BJ (cell line): ENCODE measurements at regions of chr20 and their contacts with region 1.

Region 1: GRCh38 chr20:8790442-8791074 is 278.3 kb upstream of the PLCB4 start:
- DNase-seq: no peak
- H3K4me3 ChIP-seq: no peak overlapping the region
- H3K27me3 ChIP-seq: no peaks in the 10 kb centered on the region
- CTCF ChIP-seq: peak; percentile 98

Region 2: DNA sequence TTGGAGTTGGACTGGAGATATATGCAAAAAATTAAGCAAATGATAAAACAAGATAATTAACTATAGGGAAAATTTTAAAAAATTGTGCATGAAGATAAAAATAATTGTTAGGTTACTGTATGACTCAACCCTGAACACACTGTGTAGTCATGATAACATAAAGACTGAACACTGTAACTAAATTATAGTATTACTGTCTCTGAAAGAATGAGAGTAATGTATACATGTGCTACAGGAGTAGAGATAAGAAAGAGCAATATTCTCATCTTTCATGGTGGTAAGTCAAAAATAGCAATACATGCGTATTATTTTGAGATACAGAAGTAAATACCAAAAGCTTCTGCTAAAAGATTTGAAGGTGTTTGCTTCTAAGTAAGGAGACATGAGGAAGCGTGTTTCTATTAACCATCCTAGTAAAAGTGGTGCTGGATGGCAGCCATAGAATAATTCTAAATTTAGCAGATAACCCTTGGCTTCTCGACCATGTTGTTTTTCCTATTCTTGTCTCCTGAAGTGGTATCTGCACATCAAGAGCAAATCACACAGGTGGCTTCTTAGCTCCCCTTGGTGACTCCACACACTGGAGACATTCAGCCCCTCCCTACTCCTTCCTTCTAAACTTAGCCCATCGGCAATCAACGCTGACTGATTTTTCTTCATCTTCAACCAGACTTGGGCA is 112.3 kb before region 1 on chr20:
- CTCF ChIA-PET with region 1: no interaction called
- POLR2A ChIA-PET with region 1: no interaction called
- DNase-seq: no peak
- H3K4me3 ChIP-seq: no peak overlapping the region
- H3K27me3 ChIP-seq: no peaks in the 10 kb centered on the region
- CTCF ChIP-seq: no peak

Region 3: GRCh38 chr20:9359561-9360308 is 569.2 kb after region 1 on chr20:
- CTCF ChIA-PET with region 1: interaction called, 15 read pairs
- POLR2A ChIA-PET with region 1: no interaction called
- DNase-seq: peak; percentile 34
- H3K4me3 ChIP-seq: no peak overlapping the region
- H3K27me3 ChIP-seq: no peaks in the 10 kb centered on the region
- CTCF ChIP-seq: peak; percentile 51